ENCODE measurements at regions of chr19 and their contacts with region 1.

Region 1: GRCh38 chr19:12789904-12790619 is 1.2 kb upstream of the JUNB start:
- DNase-seq: peak; percentile 75 to 97 (median 86)
- ATAC-seq: peak; percentile 25
- H3K4me3 ChIP-seq: peak overlapping the region; percentile 98
- H3K4me3 Mint-ChIP-seq: peak overlapping the region; percentile 97
- H3K27ac ChIP-seq: peak overlapping the region; percentile 99 to 100
- H3K27ac Mint-ChIP-seq: peak overlapping the region; percentile 99
- H3K4me1 ChIP-seq: peaks cover 66% of the 10 kb centered on the region
- H3K4me1 Mint-ChIP-seq: peaks cover 42% of the 10 kb centered on the region
- H3K27me3 ChIP-seq: no peaks in the 10 kb centered on the region
- H3K27me3 Mint-ChIP-seq: peaks cover 13% of the 10 kb centered on the region
- CTCF ChIP-seq: no peak

Region 2: DNA sequence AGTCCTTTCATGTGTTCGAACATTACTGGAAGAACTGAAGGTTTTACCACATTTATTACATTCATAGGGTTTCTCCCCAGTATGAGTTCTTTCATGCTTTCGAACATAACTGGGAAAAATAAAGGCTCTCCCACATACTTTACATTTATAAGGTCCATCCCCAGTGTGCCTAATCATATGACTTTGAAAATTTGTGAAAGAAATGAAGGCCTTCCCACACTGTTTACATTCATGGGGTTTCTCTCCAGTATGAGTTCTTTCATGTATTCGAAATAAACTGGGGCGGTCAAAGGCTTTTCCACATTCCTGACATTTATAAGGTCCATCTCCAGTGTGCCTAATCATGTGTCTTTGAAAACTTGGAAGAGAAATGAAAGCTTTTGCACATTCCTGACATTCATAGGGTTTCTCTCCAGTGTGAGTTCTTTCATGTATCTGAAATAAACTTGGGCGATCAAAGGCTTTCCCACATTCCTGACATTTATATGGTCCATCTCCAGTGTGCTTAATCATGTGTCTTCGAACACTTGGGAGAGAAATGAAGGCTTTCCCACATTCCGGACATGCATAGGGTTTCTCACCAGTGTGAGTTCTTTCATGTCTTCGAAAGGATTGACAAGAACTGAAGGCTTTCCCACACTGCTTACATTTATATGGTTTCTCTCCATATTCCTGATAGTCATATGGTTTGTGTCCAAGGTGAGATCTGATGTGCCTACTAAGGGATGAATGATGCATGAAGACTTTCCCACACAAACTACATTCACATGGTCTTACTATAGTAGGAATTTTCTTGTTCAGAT is 262.8 kb before region 1 on chr19:
- CTCF ChIA-PET with region 1: no interaction called
- POLR2A ChIA-PET with region 1: no interaction called
- intact Hi-C with region 1: no loop called
- DNase-seq: peak in 1 of 14 experiments; percentile 9
- ATAC-seq: no peak
- H3K4me3 ChIP-seq: no peak overlapping the region
- H3K4me3 Mint-ChIP-seq: no peak overlapping the region
- H3K27ac ChIP-seq: no peak overlapping the region
- H3K27ac Mint-ChIP-seq: peak overlapping the region; percentile 24
- H3K4me1 ChIP-seq: no peaks in the 10 kb centered on the region
- H3K4me1 Mint-ChIP-seq: peaks cover 5% of the 10 kb centered on the region
- H3K27me3 ChIP-seq: no peaks in the 10 kb centered on the region
- H3K27me3 Mint-ChIP-seq: no peaks in the 10 kb centered on the region
- CTCF ChIP-seq: no peak

Region 3: GRCh38 chr19:12666265-12667048 is 123.6 kb before region 1 on chr19 and contains the starts of genes MAN2B1 and WDR83:
- CTCF ChIA-PET with region 1: no interaction called
- POLR2A ChIA-PET with region 1: interaction called, 6 read pairs
- intact Hi-C with region 1: loop called in 1 of 2 experiments (anchors 5 kb)
- DNase-seq: peak; percentile 49 to 92 (median 71)
- ATAC-seq: peak; percentile 69
- H3K4me3 ChIP-seq: peak within 1 kb of the TSS; percentile 94
- H3K4me3 Mint-ChIP-seq: peak within 1 kb of the TSS; percentile 92
- H3K27ac ChIP-seq: peak within 1 kb of the TSS; percentile 82 to 85
- H3K27ac Mint-ChIP-seq: peak within 1 kb of the TSS; percentile 98
- H3K4me1 ChIP-seq: peaks cover 66% of the 10 kb centered on the region
- H3K4me1 Mint-ChIP-seq: peaks cover 48% of the 10 kb centered on the region
- H3K27me3 ChIP-seq: no peaks in the 10 kb centered on the region
- H3K27me3 Mint-ChIP-seq: no peaks in the 10 kb centered on the region
- CTCF ChIP-seq: no peak
- total RNA-seq, gene MAN2B1: 95.9 to 109 TPM
- total RNA-seq, gene WDR83: 6.5 to 6.6 TPM

Region 4: DNA sequence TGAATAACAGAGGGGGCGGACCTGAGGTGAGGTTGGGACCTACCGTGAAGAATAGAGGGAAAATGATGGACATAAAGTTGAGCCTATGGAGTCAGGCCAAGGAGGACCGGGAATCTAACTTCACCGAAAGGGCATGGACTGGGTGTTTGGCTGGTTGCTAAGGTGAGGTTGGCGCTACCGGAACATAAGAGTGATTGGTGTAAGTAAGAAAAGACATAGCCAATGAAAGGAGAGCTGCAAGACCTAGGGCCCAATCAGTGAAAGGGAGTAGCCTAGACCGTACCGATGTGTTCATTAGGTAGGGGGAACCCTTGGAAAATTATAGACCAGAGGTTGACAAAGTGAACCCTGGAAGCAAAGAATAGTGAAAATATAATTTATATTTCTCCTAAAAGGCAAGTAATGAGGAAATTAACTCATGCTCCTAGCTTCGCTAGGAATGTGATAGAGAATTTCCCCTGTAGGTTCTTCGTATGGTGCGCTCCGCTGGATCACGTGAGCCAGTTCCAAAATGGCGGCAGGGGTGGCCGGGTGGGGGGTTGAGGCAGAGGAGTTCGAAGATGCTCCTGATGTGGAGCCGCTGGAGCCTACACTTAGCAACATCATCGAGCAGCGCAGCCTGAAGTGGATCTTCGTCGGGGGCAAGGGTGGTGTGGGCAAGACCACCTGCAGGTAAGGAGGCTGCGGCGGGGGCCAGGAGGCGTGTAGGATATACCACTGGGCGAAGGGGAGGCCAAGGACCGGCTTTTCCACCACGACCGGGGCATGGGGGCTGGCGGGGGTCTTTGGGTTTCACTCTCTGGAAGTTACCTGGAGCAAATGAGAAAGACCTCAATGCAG is 52.8 kb before region 1 on chr19 and contains the start of gene GET3:
- CTCF ChIA-PET with region 1: no interaction called
- POLR2A ChIA-PET with region 1: interaction called, 29 read pairs
- intact Hi-C with region 1: no loop called
- DNase-seq: peak; percentile 66 to 92 (median 74)
- ATAC-seq: peak; percentile 82
- H3K4me3 ChIP-seq: peak within 1 kb of the TSS; percentile 79
- H3K4me3 Mint-ChIP-seq: peak within 1 kb of the TSS; percentile 96
- H3K27ac ChIP-seq: peak within 1 kb of the TSS; percentile 76
- H3K27ac Mint-ChIP-seq: peak within 1 kb of the TSS; percentile 86
- H3K4me1 ChIP-seq: peaks cover 52% of the 10 kb centered on the region
- H3K4me1 Mint-ChIP-seq: peaks cover 38% of the 10 kb centered on the region
- H3K27me3 ChIP-seq: no peaks in the 10 kb centered on the region
- H3K27me3 Mint-ChIP-seq: no peaks in the 10 kb centered on the region
- CTCF ChIP-seq: no peak
- total RNA-seq, gene GET3: 13.9 to 14.5 TPM

Region 5: DNA sequence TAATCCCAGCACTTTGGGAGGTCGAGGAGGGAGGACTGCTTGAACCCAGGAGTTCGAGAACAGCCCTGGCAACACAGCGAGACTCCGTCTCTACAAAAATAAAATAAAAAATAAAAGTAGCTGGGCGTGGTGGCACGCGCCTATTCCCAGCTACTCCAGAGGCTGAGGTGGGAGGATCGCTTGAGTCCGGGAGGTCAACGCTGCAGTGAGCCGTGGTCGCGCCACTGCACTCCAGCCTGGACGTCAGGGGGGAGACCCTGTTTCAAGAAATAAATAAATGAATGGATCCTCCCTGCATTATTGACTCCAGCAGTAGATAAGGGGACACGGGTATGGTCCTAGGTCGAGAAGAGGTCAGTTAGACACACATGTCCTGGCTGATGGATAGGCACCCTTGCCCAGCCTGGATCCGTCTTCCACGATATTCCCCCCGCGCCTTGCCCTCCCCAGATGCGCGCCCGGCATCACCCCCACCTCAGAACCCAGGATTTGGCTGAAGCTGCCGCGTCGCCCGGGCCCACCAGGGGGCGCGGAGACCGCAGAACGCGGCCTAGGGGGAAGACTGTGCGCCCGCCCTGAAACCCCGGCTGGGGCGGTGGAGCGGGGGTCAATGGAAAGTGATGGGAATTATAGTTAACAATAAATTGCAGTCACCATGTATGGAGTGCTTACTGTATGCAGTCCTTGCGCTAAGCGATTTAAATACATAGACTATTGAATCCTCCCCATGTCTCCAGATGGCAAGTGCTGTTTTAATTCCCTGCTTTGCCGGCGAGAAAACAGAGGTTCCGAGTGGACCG is 12.6 kb before region 1 on chr19:
- CTCF ChIA-PET with region 1: interaction called, 178 read pairs
- POLR2A ChIA-PET with region 1: interaction called, 348 read pairs
- intact Hi-C with region 1: loop called (anchors 1 kb)
- DNase-seq: peak; percentile 67 to 91 (median 78)
- ATAC-seq: peak; percentile 4
- H3K4me3 ChIP-seq: peak overlapping the region; percentile 84
- H3K4me3 Mint-ChIP-seq: peak overlapping the region; percentile 90
- H3K27ac ChIP-seq: peak overlapping the region; percentile 82 to 85
- H3K27ac Mint-ChIP-seq: peak overlapping the region; percentile 94
- H3K4me1 ChIP-seq: peaks cover 63% of the 10 kb centered on the region
- H3K4me1 Mint-ChIP-seq: peaks cover 47% of the 10 kb centered on the region
- H3K27me3 ChIP-seq: no peaks in the 10 kb centered on the region
- H3K27me3 Mint-ChIP-seq: no peaks in the 10 kb centered on the region
- CTCF ChIP-seq: peak; percentile 97

Region 6: GRCh38 chr19:12890787-12891552 is 100.9 kb after region 1 on chr19 and contains the start of gene GCDH:
- CTCF ChIA-PET with region 1: no interaction called
- POLR2A ChIA-PET with region 1: interaction called, 13 read pairs
- intact Hi-C with region 1: no loop called
- DNase-seq: peak; percentile 90 to 99 (median 94)
- ATAC-seq: peak; percentile 89
- H3K4me3 ChIP-seq: peak within 1 kb of the TSS; percentile 89
- H3K4me3 Mint-ChIP-seq: peak within 1 kb of the TSS; percentile 96
- H3K27ac ChIP-seq: peak within 1 kb of the TSS; percentile 67 to 68
- H3K27ac Mint-ChIP-seq: peak within 1 kb of the TSS; percentile 90
- H3K4me1 ChIP-seq: peaks cover 25% of the 10 kb centered on the region
- H3K4me1 Mint-ChIP-seq: peaks cover 31% of the 10 kb centered on the region
- H3K27me3 ChIP-seq: no peaks in the 10 kb centered on the region
- H3K27me3 Mint-ChIP-seq: no peaks in the 10 kb centered on the region
- CTCF ChIP-seq: no peak
- total RNA-seq, gene GCDH: 39.2 to 42.1 TPM